ENCODE measurements at regions of chr10 and their contacts with region 1.

Region 1: DNA sequence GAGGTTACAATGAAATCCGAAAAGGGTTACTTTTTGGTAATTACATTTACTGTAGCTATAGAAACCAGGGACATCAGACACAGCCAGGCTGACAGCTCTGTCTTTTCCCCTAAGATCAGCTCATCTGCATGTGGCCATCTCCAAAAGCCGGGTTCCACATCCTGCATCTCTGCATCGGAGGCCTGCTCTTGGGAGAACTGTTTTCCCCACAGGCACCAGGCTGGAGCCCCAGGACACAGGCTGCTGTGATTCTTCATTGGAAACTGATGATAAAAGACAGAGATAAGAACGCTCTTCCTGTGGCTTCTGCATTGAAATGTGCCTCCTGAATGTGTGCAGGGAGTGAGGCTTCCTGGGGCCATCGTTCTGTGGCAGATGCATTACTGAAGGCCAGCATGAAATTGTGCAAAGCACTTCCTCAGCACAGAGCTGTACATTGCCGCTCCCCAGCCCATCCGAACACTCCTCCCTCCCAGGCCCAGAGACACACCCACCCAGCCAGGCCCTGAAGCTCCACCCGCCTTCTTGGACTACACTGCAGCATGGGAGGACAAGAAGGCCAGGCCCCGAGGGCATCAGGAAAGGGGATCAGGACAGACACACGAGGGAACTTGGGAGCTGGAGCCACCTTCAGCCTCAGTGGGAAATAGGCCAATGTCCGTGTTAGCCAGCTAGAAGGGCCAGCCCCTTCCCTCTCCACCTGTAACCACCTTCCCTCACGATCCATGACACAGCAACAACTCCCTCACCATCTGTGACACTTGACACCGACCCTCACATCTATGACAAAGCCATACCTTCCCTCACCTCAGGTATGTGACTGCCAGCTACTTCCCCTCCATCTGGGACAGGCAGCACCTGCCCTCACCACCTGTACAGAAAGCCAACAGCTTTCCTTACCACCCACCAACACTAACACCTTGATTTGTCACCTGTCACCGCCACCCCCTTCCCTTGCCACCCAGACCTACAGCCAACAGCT is 113.2 kb downstream of the GRID1 start:
- DNase-seq: no peak
- H3K4me3 ChIP-seq: no peak overlapping the region
- H3K27ac ChIP-seq: no peak overlapping the region
- H3K4me1 ChIP-seq: no peaks in the 10 kb centered on the region
- CTCF ChIP-seq: no peak

Region 2: DNA sequence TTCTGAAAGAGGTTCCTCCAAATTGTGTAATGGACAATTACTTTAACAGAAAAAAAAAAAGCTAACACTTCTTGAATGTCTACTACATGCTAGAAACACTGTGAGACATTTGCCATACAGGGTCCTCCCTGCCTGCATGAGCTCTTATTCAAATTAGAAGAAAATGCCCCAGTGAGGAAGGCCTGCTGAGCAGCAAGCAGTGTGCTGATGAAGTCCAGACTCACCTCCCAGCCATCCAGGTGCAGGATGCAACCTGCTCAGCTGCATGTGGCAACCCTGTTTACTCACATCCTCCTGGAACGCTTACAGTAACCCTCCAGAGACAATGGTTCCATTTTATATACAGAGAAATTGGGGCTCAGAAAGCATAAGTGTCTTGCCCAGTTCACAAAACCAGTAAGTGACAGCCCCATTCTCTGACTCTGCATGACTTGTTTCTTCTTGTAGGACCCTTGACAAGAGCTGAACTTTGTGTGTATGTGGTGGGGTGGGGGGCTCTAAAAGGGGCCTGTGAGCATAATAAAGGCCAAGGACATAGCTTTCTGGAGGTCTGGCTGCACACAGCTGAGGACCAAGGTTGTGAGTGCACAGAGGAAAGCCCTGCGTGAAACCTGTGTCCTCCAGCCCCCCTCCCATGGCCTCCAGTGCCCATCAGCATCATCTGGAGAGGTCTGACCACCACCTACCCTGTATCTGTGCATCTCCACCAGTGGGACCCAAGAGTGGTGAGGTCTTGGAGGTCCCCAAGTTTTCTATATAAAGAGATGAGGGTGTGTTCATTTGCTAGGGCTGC is 274.6 kb before region 1 on chr10:
- CTCF ChIA-PET with region 1: no interaction called
- POLR2A ChIA-PET with region 1: no interaction called
- intact Hi-C with region 1: no loop called
- DNase-seq: no peak
- H3K4me3 ChIP-seq: no peak overlapping the region
- H3K27ac ChIP-seq: no peak overlapping the region
- H3K4me1 ChIP-seq: no peaks in the 10 kb centered on the region
- CTCF ChIP-seq: no peak

Region 3: GRCh38 chr10:86178401-86179152 is 74.8 kb before region 1 on chr10:
- CTCF ChIA-PET with region 1: no interaction called
- POLR2A ChIA-PET with region 1: no interaction called
- intact Hi-C with region 1: no loop called
- DNase-seq: peak; percentile 7
- H3K4me3 ChIP-seq: no peak overlapping the region
- H3K27ac ChIP-seq: no peak overlapping the region
- H3K4me1 ChIP-seq: no peaks in the 10 kb centered on the region
- CTCF ChIP-seq: no peak; the same call in 1 of the 2 replicates

Region 4: DNA sequence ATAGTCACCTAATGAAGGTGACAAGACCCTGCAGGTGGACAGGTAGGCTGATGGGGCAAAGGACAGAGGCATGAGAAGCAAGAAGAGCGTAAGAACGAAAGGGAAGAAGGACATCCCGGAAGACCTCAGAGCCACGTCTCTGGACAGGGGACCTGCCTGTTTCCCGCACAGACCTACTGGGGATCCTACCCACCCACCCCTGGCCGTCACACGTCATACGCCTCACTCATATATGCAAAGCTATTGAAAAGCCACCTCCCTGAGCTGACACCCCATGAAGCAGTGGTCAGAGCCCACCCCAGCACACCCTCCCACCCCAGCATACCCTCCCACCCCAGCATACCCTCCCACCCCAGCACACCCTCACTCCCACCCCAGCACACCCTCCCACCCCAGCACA is 27.4 kb before region 1 on chr10:
- CTCF ChIA-PET with region 1: interaction called, 13 read pairs
- POLR2A ChIA-PET with region 1: interaction called, 3 read pairs
- intact Hi-C with region 1: no loop called
- DNase-seq: no peak
- H3K4me3 ChIP-seq: no peak overlapping the region
- H3K27ac ChIP-seq: no peak overlapping the region
- H3K4me1 ChIP-seq: no peaks in the 10 kb centered on the region
- CTCF ChIP-seq: no peak

Measured in OCI-LY7 (cell line).